ENCODE measurements at regions of chr3 and their contacts with region 1.

Region 1: GRCh38 chr3:195271116-195271858 is at the start of gene XXYLT1:
- DNase-seq: peak; percentile 75 to 96 (median 91)

Region 2: GRCh38 chr3:195522254-195523023 is 251.2 kb after region 1 on chr3:
- intact Hi-C with region 1: loop called (anchors 2 kb)
- DNase-seq: peak in 4 of 42 donors; percentile 29 to 78 (median 40)